Mammary epithelial cell (primary cell): ENCODE measurements at regions of chr7 and their contacts with region 1.

Region 1: DNA sequence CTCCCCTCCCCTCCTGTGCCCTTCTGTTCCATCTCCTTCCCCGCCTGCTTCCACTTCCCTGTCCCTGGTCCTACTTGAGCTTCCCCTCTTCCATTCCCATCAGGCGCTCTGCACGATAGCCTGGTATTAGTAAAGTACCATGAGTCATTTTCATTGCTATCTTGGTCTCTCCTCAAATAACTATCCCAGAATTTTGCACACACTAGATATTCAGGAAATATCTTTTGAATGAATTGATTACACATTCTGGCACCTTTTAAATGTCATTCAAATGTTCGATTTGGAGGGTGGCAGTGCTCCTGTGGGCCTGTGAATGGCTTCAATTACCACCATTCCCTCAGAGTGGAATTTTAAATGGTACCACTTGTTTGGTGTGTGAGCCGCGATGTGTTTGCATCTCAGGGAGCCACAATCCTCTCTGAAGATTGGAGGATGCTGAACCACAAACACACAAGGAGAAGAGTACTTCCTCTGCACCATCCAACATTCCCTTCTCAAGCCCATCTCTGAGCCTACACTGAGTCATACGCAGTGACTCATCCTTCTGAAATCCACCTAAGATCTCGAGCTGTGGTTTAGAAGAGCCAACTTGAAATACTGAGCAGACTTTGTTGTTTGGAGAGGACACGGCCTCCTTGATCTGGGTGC is 81.7 kb downstream of the BMPER start:
- DNase-seq: peak; percentile 96
- H3K4me3 ChIP-seq: no peak overlapping the region
- H3K27ac ChIP-seq: peak overlapping the region; percentile 68
- H3K4me1 ChIP-seq: peaks cover 29% of the 10 kb centered on the region
- H3K27me3 ChIP-seq: no peaks in the 10 kb centered on the region
- CTCF ChIP-seq: no peak

Region 2: DNA sequence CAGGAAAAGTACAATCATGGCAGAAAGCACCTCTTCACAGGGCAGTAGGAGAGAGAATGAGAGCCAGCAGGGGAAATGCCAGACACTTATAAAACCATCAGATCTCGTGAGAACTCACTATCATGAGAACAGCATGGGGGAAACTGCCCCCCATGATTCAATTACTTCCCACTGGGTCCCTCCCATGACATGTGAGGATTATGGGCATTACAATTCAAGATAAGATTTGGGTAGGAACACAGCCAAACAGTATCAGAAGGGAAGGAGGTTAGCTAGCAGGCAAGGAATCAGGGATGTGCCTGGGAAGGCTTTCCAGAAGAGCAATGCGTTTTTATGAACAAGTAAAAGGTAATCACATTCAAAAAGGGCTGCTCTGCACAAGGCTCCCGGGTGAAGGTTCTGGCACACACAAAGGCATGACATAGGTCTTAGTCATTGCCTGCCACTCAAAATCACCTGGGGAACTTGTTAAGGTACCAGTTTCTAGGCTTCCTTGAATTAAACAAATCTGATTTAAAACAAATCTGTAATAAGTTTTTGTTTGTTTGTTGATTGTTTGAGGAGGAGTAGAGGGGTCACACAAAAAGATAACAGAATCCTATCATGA is 40.9 kb before region 1 on chr7:
- CTCF ChIA-PET with region 1: interaction called, 17 read pairs
- dilution Hi-C with region 1: no loop called
- in situ Hi-C with region 1: no loop called
- intact Hi-C with region 1: no loop called
- DNase-seq: peak; percentile 59
- H3K4me3 ChIP-seq: no peak overlapping the region
- H3K27ac ChIP-seq: no peak overlapping the region
- H3K4me1 ChIP-seq: no peaks in the 10 kb centered on the region
- H3K27me3 ChIP-seq: no peaks in the 10 kb centered on the region
- CTCF ChIP-seq: no peak

Region 3: DNA sequence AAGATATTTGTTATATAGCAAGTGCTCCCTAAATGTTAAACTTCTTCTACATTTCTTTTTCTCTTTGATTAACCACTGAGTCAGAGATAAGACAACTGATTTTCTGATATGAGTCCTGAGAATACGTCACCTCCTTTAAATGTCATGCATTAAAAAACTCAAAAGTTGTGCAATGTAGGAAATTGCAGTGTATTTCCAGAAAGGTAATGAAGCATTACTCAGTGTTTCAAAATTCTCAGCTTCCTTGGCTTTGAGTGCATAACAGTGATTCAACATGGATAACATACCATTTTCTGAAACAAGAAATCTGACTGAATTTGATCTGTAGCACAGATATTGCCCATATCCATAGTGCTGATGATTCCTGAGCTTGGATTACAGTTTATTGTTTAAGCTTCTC is 74.1 kb after region 1 on chr7:
- CTCF ChIA-PET with region 1: no interaction called
- dilution Hi-C with region 1: no loop called
- in situ Hi-C with region 1: no loop called
- intact Hi-C with region 1: loop called (anchors 2 kb)
- DNase-seq: peak; percentile 87
- H3K4me3 ChIP-seq: no peak overlapping the region
- H3K27ac ChIP-seq: no peak overlapping the region
- H3K4me1 ChIP-seq: peaks cover 8% of the 10 kb centered on the region
- H3K27me3 ChIP-seq: peaks cover 3% of the 10 kb centered on the region
- CTCF ChIP-seq: no peak

Region 4: GRCh38 chr7:34165929-34166550 is 179.0 kb after region 1 on chr7:
- CTCF ChIA-PET with region 1: no interaction called
- dilution Hi-C with region 1: no loop called
- in situ Hi-C with region 1: no loop called
- intact Hi-C with region 1: loop called (anchors 2 kb)
- DNase-seq: peak; percentile 33
- H3K4me3 ChIP-seq: no peak overlapping the region
- H3K27ac ChIP-seq: no peak overlapping the region
- H3K4me1 ChIP-seq: no peaks in the 10 kb centered on the region
- H3K27me3 ChIP-seq: no peaks in the 10 kb centered on the region
- CTCF ChIP-seq: peak; percentile 50 to 77